GM12878 (cell line): ENCODE measurements at regions of chr10 and their contacts with region 1.

Region 1: GRCh38 chr10:63629363-63630084 is 108.3 kb downstream of the REEP3 start:
- DNase-seq: peak; percentile 83
- ATAC-seq: peak; percentile 79
- H3K4me3 ChIP-seq: peak overlapping the region; percentile 87
- H3K27ac ChIP-seq: peak overlapping the region; percentile 89
- H3K4me1 ChIP-seq: peaks cover 9% of the 10 kb centered on the region; the same call in 1 of the 2 replicates
- H3K27me3 ChIP-seq: no peaks in the 10 kb centered on the region
- CTCF ChIP-seq: peak; percentile 84 to 94 (median 92)
- EP300 ChIP-seq: 0 out of 4 replicates have a peak, but pooled peaks of 1 of the 2 experiments have one; percentile 25
- POLR2A ChIP-seq: no peak
- RAD21 ChIP-seq: peak; percentile 87

Region 2: GRCh38 chr10:63166742-63167258 is 462.7 kb before region 1 on chr10:
- CTCF ChIA-PET with region 1: interaction called, 188 read pairs
- POLR2A ChIA-PET with region 1: interaction called, 8 read pairs
- RAD21 ChIA-PET with region 1: interaction called, 89 read pairs
- SMC1A ChIA-PET with region 1: interaction called, 107 read pairs
- in situ Hi-C with region 1: no loop called
- intact Hi-C with region 1: loop called (anchors 1 kb)
- DNase-seq: peak; percentile 33
- ATAC-seq: peak; percentile 78
- H3K4me3 ChIP-seq: no peak overlapping the region
- H3K27ac ChIP-seq: no peak overlapping the region
- H3K4me1 ChIP-seq: no peaks in the 10 kb centered on the region
- H3K27me3 ChIP-seq: no peaks in the 10 kb centered on the region
- CTCF ChIP-seq: peak; percentile 63 to 72 (median 66)
- EP300 ChIP-seq: no peak
- POLR2A ChIP-seq: no peak
- RAD21 ChIP-seq: peak; percentile 80

Region 3: GRCh38 chr10:63206997-63207811 is 422.3 kb before region 1 on chr10:
- CTCF ChIA-PET with region 1: interaction called, 11 read pairs
- POLR2A ChIA-PET with region 1: interaction called, 5 read pairs
- RAD21 ChIA-PET with region 1: interaction called, 30 read pairs
- SMC1A ChIA-PET with region 1: interaction called, 24 read pairs
- in situ Hi-C with region 1: loop called (anchors 5 kb)
- intact Hi-C with region 1: loop called (anchors 2 kb)
- DNase-seq: peak; percentile 36
- ATAC-seq: peak; percentile 51
- H3K4me3 ChIP-seq: no peak overlapping the region; the same call in 1 of the 2 replicates
- H3K27ac ChIP-seq: peak overlapping the region; percentile 75
- H3K4me1 ChIP-seq: peaks cover 32% of the 10 kb centered on the region
- H3K27me3 ChIP-seq: no peaks in the 10 kb centered on the region
- CTCF ChIP-seq: no peak
- EP300 ChIP-seq: no peak
- POLR2A ChIP-seq: no peak; the same call in 1 of the 2 replicates
- RAD21 ChIP-seq: no peak

Region 4: GRCh38 chr10:63261496-63261895 is 368.0 kb before region 1 on chr10:
- CTCF ChIA-PET with region 1: interaction called, 17 read pairs
- POLR2A ChIA-PET with region 1: interaction called, 6 read pairs
- RAD21 ChIA-PET with region 1: interaction called, 24 read pairs
- SMC1A ChIA-PET with region 1: interaction called, 31 read pairs
- in situ Hi-C with region 1: no loop called
- intact Hi-C with region 1: loop called (anchors 2 kb)
- DNase-seq: no peak
- ATAC-seq: peak; percentile 46
- H3K4me3 ChIP-seq: peak overlapping the region; percentile 35; the same call in 1 of the 2 replicates
- H3K27ac ChIP-seq: peak overlapping the region; percentile 81
- H3K4me1 ChIP-seq: peaks cover 32% of the 10 kb centered on the region
- H3K27me3 ChIP-seq: no peaks in the 10 kb centered on the region
- CTCF ChIP-seq: no peak
- EP300 ChIP-seq: 0 out of 4 replicates have a peak, but pooled peaks of 1 of the 2 experiments have one; percentile 24
- POLR2A ChIP-seq: no peak
- RAD21 ChIP-seq: no peak

Region 5: GRCh38 chr10:63355682-63356081 is 273.8 kb before region 1 on chr10:
- CTCF ChIA-PET with region 1: interaction called, 9 read pairs
- POLR2A ChIA-PET with region 1: no interaction called
- RAD21 ChIA-PET with region 1: no interaction called
- SMC1A ChIA-PET with region 1: interaction called, 13 read pairs
- in situ Hi-C with region 1: no loop called
- intact Hi-C with region 1: loop called (anchors 2 kb)
- DNase-seq: no peak
- ATAC-seq: peak; percentile 64
- H3K4me3 ChIP-seq: no peak overlapping the region
- H3K27ac ChIP-seq: peak overlapping the region; percentile 51
- H3K4me1 ChIP-seq: peaks cover 13% of the 10 kb centered on the region
- H3K27me3 ChIP-seq: no peaks in the 10 kb centered on the region
- CTCF ChIP-seq: no peak
- EP300 ChIP-seq: no peak
- POLR2A ChIP-seq: no peak
- RAD21 ChIP-seq: no peak

Region 6: DNA sequence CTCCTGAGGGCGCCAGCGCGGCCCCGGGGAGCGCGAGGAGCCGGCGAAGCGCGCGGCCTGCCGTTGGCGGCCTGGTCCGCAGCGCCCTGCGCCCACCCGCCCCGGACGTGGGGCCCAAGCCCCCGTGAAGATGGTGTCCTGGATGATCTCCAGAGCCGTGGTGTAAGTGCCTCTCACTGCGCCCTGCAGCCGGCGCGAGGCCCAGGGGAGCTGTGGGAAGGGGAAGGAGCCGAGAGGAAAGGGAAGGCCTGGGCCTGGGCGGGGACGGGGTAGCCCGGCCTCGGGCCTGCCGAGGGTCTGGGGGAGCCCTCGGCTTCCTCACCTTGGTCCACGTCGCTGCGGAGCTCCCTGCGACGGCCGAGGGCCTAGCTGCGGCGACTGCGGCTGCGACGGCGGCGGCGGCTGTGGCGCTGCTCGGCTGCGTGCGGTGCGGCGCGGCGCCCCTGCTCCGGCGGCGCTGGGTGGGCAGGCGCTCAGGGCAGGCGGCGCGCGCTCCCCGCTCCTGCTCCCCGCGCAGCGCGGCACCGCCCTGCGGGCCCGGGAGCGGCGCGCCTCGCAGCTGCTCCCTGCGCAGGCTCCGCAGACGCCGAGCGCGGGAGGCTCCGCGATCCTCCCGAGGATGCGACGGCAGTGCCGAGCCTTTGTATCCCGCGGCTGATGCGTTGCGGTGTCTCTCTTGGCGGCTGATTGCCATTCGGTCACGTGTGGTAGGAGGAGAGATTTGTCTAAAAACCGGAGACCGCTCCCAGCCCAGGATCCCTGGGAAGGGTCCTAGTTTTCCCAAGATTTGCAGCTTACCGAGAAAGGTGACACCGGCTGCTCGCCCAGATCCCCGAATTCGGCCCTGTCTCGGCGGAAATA is 107.9 kb before region 1 on chr10:
- CTCF ChIA-PET with region 1: interaction called, 9 read pairs
- POLR2A ChIA-PET with region 1: interaction called, 10 read pairs
- RAD21 ChIA-PET with region 1: interaction called, 25 read pairs
- SMC1A ChIA-PET with region 1: interaction called, 8 read pairs
- in situ Hi-C with region 1: no loop called
- intact Hi-C with region 1: loop called (anchors 2 kb)
- DNase-seq: no peak
- ATAC-seq: peak; percentile 71
- H3K4me3 ChIP-seq: peak overlapping the region; percentile 89
- H3K27ac ChIP-seq: peak overlapping the region; percentile 92
- H3K4me1 ChIP-seq: peaks cover 12% of the 10 kb centered on the region; the same call in 1 of the 2 replicates
- H3K27me3 ChIP-seq: no peaks in the 10 kb centered on the region
- CTCF ChIP-seq: no peak
- EP300 ChIP-seq: no peak
- POLR2A ChIP-seq: peak; percentile 69
- RAD21 ChIP-seq: 0 out of 2 replicates have a peak, but pooled peaks have one; percentile 4

Region 7: GRCh38 chr10:63689768-63690167 is 60.2 kb after region 1 on chr10:
- CTCF ChIA-PET with region 1: no interaction called
- POLR2A ChIA-PET with region 1: no interaction called
- RAD21 ChIA-PET with region 1: no interaction called
- SMC1A ChIA-PET with region 1: no interaction called
- in situ Hi-C with region 1: no loop called
- intact Hi-C with region 1: no loop called
- DNase-seq: no peak
- ATAC-seq: no peak; the same call in 2 of the 3 replicates
- H3K4me3 ChIP-seq: no peak overlapping the region
- H3K27ac ChIP-seq: no peak overlapping the region
- H3K4me1 ChIP-seq: peaks cover 5% of the 10 kb centered on the region; the same call in 1 of the 2 replicates
- H3K27me3 ChIP-seq: no peaks in the 10 kb centered on the region
- CTCF ChIP-seq: no peak
- EP300 ChIP-seq: no peak
- POLR2A ChIP-seq: no peak
- RAD21 ChIP-seq: no peak